Activated CD4-positive, alpha-beta memory T cell treated with anti-CD3 and anti-CD28 coated beads for 36 hours (primary cell): ENCODE measurements at regions of chr5 and their contacts with region 1.

Region 1: GRCh38 chr5:170278611-170279452 is 18.7 kb downstream of the LCP2 start:
- DNase-seq: peak; percentile 93
- H3K4me3 Mint-ChIP-seq: peak overlapping the region; percentile 40
- H3K27ac Mint-ChIP-seq: peak overlapping the region; percentile 95
- H3K4me1 Mint-ChIP-seq: peaks cover 94% of the 10 kb centered on the region
- H3K27me3 Mint-ChIP-seq: no peaks in the 10 kb centered on the region

Region 2: DNA sequence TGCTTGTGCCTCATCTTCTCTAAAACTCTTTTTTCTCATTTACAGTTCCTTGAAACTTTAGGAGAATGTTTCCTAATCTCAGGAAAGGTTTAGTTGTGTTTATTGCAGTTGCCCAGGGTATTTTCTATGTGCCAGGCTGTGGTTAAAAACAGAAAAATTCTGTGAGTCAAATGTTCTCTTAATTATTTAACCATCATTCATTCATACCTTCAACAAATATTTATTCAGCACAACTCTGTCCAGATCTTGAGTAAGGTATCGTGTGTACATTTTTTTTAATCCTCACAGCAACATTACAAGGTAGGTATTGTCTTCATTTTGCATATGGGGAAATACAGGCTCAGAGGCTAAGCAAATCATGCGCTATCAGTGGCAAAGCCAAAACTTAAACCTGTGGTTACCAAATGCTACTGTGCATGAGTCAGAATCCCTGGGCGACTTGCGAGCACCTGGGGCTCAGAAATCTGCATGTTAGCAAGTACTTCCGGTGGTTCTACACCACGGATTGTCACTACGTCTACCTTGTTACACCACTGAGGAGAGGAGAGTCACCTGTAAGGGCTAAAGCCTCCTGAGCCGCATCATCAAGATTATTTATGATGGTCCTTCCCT is 24.9 kb before region 1 on chr5:
- CTCF ChIA-PET with region 1: interaction called, 3 read pairs
- POLR2A ChIA-PET with region 1: no interaction called
- intact Hi-C with region 1: loop called (anchors 1 kb)
- DNase-seq: peak; percentile 80
- H3K4me3 Mint-ChIP-seq: no peak overlapping the region
- H3K27ac Mint-ChIP-seq: peak overlapping the region; percentile 73
- H3K4me1 Mint-ChIP-seq: peaks cover 57% of the 10 kb centered on the region
- H3K27me3 Mint-ChIP-seq: no peaks in the 10 kb centered on the region

Region 3: DNA sequence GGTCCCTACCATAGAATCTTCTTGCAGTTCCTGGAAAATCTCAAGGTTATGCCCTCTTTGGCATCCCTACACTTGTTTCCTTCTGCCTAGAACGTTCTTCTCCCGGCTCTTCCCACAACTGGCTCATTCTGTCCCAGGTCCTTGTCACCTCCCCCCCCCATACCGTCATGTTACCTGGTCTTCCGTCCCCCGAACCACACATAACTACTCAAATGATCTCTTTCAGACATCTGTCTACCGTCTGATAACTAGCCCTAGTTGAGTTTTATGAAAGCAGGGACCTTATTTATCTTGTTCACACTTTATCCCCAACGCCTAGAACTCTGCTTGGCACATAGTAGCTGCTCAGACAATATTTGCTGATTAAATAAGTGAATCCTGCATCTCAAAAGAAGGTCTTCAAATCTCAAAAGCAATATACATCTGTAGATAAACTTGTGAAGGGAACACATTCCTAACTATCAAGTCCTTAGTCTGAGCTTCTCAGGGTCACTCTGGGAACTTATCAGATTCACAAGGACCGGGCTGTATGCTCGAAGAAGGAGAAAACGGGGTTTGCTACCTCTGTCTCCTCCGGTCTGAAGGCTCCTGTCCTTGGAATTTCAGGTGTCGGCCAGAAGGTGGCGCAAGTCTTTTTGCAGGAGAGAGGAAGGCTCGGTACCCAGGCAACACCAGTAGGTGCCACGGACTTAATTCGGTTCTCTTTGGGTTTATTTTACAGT is 11.2 kb before region 1 on chr5:
- CTCF ChIA-PET with region 1: interaction called, 49 read pairs
- POLR2A ChIA-PET with region 1: interaction called, 9 read pairs
- intact Hi-C with region 1: loop called (anchors 1 kb)
- DNase-seq: peak; percentile 87
- H3K4me3 Mint-ChIP-seq: peak overlapping the region; percentile 60
- H3K27ac Mint-ChIP-seq: peak overlapping the region; percentile 85
- H3K4me1 Mint-ChIP-seq: peaks cover 87% of the 10 kb centered on the region
- H3K27me3 Mint-ChIP-seq: no peaks in the 10 kb centered on the region

Region 4: DNA sequence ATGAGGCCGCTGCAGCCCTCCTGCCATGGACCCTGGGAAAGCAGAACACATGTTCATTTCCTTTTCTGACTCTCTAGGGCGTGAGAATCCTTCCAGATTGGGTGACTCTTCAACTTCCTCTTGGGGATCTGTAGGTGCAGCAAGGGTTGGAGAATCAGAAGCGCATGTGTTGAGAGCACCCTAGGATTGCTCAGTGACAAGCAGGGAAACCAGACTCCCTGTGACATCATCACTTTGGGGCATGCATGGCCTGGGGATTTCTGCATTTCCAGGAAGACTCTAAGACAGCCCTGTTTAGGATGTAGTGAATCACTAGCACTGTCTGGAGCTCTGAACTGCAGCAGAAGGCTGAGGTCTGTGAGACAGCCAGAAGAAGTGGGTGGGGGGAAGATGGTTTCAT is 33.8 kb after region 1 on chr5:
- CTCF ChIA-PET with region 1: interaction called, 5 read pairs
- POLR2A ChIA-PET with region 1: interaction called, 4 read pairs
- intact Hi-C with region 1: loop called (anchors 1 kb)
- DNase-seq: peak; percentile 88
- H3K4me3 Mint-ChIP-seq: peak overlapping the region; percentile 79
- H3K27ac Mint-ChIP-seq: peak overlapping the region; percentile 95
- H3K4me1 Mint-ChIP-seq: peaks cover 51% of the 10 kb centered on the region
- H3K27me3 Mint-ChIP-seq: no peaks in the 10 kb centered on the region

Region 5: DNA sequence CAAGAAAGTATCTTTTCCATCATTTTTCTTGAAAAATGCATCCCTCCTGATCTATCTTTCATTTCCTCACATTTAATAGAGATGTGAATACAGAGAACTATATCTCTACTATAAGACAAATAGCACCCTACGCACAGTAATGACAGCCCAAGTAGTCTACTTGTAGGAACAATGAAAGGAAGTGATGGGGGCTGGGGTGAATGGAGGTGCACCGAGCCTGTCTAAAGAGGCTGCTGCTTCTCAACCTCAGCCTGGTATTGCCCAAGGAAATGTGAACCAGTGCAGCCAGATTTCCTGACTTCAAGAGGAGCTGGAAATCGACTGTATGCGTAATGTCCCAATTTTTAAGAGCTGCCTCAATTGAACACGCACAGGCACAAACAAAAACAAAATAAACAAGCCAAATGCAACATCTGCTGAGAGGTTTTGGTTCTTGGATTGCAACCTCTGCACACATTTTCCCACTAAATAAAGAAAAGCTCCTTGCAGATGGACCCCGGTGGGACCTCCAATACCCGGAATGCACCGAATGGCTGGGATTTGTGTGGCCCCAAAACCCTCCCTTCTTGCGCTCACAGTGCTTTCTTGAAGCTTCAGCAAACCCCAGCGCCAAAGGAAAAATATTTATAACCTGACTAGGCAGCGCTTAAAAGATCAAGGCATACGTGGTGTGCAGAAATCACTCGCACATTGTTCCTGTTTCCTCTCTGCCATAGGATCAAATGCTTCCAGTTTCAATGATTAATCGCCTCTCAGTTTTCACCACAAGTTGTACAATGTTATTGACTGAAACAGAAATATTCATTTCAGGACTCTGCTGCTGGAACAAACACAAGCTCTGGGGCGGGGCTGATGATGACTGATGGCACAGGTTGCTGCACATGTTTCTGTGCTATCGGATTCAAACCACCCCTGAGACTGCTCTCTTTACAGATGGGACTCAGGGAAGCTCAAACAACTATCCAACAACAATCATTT is 293.3 kb after region 1 on chr5:
- CTCF ChIA-PET with region 1: no interaction called
- POLR2A ChIA-PET with region 1: no interaction called
- intact Hi-C with region 1: loop called (anchors 5 kb)
- DNase-seq: peak; percentile 90
- H3K4me3 Mint-ChIP-seq: no peak overlapping the region
- H3K27ac Mint-ChIP-seq: no peak overlapping the region
- H3K4me1 Mint-ChIP-seq: peaks cover 17% of the 10 kb centered on the region
- H3K27me3 Mint-ChIP-seq: peaks cover 55% of the 10 kb centered on the region

Region 6: DNA sequence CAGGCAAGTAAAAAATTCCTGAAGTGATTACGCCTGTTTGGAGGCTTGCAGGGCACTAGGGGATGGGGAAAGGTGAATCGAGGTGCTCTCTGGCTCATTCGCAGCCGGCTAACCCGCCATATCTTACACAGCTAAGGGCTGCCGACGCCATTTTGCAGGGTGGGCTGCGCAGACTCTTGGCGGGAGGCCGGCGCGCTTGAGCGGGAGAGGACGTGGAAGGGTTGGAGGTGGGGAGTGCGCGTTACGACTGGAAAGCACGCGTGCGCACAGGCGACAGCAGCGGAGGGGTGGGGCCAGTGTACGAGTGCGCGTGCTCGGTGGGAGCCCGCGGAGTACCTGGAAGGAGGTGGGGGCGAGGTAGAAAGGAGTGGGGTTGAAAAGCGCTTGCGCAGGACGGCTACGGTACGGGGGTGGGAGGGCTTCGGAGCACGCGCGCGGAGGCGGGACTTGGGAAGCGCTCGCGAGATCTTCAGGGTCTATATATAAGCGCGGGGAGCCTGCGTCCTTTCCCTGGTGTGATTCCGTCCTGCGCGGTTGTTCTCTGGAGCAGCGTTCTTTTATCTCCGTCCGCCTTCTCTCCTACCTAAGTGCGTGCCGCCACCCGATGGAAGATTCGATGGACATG is 1108.6 kb after region 1 on chr5 and contains the start of gene NPM1:
- CTCF ChIA-PET with region 1: no interaction called
- POLR2A ChIA-PET with region 1: no interaction called
- intact Hi-C with region 1: loop called (anchors 5 kb)
- DNase-seq: peak; percentile 98
- H3K4me3 Mint-ChIP-seq: peak within 1 kb of the TSS; percentile 93
- H3K27ac Mint-ChIP-seq: peak within 1 kb of the TSS; percentile 96
- H3K4me1 Mint-ChIP-seq: peaks cover 39% of the 10 kb centered on the region
- H3K27me3 Mint-ChIP-seq: peaks cover 3% of the 10 kb centered on the region
- total RNA-seq, gene NPM1: 2,483 to 2,592 TPM